Activated CD4-positive, alpha-beta T cell treated with anti-CD3 and anti-CD28 coated beads for 36 hours (primary cell): ENCODE measurements at regions of chr2 and their contacts with region 1.

Region 1: DNA sequence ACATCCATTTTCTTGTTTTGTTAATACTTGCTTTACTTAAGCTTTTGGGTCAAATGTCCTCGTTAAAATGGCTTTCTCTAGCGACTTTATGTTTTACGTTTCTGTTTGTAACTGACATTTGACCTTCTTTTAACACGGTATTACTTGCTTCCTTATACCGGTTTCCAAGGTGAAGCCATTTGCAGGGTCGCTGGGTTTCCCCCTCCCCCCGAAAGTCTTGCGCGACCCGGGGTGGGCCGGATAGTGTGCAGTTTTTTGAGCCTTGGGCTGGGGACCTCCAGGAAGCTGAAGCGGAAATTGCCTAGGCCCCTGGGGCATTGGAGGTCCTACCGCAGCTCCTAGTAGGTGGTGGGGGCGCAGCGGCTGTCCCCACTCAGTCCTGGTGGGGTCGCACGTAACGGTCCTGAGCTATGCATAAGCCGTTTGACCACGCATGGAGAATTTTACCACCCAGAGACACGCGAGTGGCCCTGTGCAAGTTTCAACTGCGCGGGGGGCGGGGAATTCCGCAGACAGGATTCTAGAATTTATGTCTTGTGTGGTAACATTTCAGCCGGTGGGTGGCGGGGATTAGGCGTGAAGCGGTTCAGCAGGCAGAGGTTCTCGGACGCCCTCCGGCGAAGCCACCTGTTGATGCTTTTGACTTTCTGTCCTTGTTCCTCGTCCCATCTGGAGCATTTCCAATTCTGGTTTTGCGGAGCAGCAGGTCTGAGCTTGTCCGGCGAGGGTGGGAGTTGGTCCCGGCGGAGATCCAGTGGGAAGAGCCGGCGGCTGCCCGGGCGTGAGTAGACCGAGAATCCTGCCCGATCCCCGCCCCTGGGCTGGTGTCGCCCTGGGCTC is 2.4 kb downstream of the CFLAR start:
- DNase-seq: peak; percentile 94
- ATAC-seq: peak; percentile 37
- H3K4me3 Mint-ChIP-seq: peak overlapping the region; percentile 98
- H3K27ac Mint-ChIP-seq: peak overlapping the region; percentile 100
- H3K4me1 Mint-ChIP-seq: peaks cover 42% of the 10 kb centered on the region
- H3K27me3 Mint-ChIP-seq: no peaks in the 10 kb centered on the region

Region 2: GRCh38 chr2:200829258-200829655 is 289.1 kb before region 1 on chr2:
- CTCF ChIA-PET with region 1: no interaction called
- POLR2A ChIA-PET with region 1: no interaction called
- intact Hi-C with region 1: no loop called
- DNase-seq: no peak
- ATAC-seq: no peak
- H3K4me3 Mint-ChIP-seq: no peak overlapping the region
- H3K27ac Mint-ChIP-seq: no peak overlapping the region
- H3K4me1 Mint-ChIP-seq: no peaks in the 10 kb centered on the region
- H3K27me3 Mint-ChIP-seq: no peaks in the 10 kb centered on the region

Region 3: DNA sequence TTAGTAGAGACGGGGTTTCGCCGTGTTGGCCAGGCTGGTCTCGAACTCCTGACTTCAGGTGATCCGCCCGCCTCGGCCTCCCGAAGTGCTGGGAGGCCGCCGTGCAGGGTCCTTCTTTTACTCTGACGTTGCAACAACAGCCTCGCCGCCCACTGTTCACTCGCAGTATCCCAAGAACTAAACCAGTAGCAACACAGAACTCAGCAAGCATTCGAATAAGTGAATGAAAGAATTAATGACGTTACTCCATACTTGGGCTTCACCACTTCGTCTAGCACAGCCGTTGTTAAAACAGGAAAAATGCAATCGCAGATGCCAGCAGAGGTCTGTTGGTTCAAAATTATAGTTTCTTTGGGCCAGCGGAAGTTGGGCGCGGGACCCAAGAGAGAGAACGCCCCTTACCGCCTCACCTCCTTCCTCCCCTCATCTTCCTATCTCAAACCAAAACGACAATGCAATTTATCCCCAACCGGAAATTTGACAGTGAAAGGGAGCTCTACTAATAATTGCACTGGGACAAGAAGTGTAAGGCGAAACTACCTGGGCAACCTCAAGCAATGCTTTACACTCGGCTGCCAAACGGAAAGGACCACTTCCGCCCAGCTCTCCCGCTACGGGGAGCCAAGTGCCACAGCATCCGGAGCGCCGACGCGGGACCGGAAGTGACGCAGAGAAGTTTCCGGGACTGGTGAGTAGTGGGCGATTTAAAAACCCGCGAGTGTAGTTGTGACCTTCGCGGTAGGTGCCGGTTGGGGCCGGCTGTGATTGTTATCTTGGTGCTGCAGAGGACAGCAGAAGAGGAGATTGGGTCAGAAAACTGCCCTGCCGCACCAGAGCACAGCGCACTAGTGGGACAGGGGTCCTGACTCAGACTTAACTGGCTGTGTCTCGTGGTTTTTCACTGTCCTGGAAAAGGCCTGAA is 229.4 kb before region 1 on chr2 and contains the starts of genes NIF3L1 and PPIL3:
- CTCF ChIA-PET with region 1: interaction called, 6 read pairs
- POLR2A ChIA-PET with region 1: no interaction called
- intact Hi-C with region 1: loop called (anchors 1 kb)
- DNase-seq: peak; percentile 99
- ATAC-seq: peak; percentile 83
- H3K4me3 Mint-ChIP-seq: peak within 1 kb of the TSS; percentile 98
- H3K27ac Mint-ChIP-seq: peak within 1 kb of the TSS; percentile 100
- H3K4me1 Mint-ChIP-seq: peaks cover 46% of the 10 kb centered on the region
- H3K27me3 Mint-ChIP-seq: no peaks in the 10 kb centered on the region
- total RNA-seq, gene NIF3L1: 37.0 to 47.7 TPM
- total RNA-seq, gene PPIL3: 52.6 to 53.0 TPM

Region 4: GRCh38 chr2:201040867-201041628 is 77.3 kb before region 1 on chr2:
- CTCF ChIA-PET with region 1: no interaction called
- POLR2A ChIA-PET with region 1: no interaction called
- intact Hi-C with region 1: no loop called
- DNase-seq: no peak
- ATAC-seq: no peak
- H3K4me3 Mint-ChIP-seq: no peak overlapping the region
- H3K27ac Mint-ChIP-seq: no peak overlapping the region
- H3K4me1 Mint-ChIP-seq: peaks cover 4% of the 10 kb centered on the region
- H3K27me3 Mint-ChIP-seq: no peaks in the 10 kb centered on the region

Region 5: DNA sequence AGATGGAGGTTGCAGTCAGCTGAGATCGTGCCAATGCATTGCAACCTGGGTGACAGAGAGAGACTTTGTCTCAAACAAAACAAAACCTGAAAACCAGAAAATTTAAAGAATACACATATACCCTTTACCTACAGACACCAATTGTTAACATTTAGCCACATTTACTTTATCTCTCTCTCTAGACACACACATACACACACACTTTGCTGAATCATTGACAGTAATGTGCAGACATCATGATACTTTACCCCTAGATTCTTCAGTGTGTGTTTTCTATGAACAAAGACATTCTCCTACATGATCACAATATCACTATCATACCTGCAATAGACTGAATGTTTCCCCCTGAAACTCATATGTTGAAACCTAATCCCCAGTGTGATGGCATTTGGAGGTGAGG is 12.6 kb before region 1 on chr2:
- CTCF ChIA-PET with region 1: interaction called, 11 read pairs
- POLR2A ChIA-PET with region 1: no interaction called
- intact Hi-C with region 1: no loop called
- DNase-seq: no peak
- ATAC-seq: no peak
- H3K4me3 Mint-ChIP-seq: no peak overlapping the region
- H3K27ac Mint-ChIP-seq: no peak overlapping the region
- H3K4me1 Mint-ChIP-seq: no peaks in the 10 kb centered on the region
- H3K27me3 Mint-ChIP-seq: no peaks in the 10 kb centered on the region

Region 6: DNA sequence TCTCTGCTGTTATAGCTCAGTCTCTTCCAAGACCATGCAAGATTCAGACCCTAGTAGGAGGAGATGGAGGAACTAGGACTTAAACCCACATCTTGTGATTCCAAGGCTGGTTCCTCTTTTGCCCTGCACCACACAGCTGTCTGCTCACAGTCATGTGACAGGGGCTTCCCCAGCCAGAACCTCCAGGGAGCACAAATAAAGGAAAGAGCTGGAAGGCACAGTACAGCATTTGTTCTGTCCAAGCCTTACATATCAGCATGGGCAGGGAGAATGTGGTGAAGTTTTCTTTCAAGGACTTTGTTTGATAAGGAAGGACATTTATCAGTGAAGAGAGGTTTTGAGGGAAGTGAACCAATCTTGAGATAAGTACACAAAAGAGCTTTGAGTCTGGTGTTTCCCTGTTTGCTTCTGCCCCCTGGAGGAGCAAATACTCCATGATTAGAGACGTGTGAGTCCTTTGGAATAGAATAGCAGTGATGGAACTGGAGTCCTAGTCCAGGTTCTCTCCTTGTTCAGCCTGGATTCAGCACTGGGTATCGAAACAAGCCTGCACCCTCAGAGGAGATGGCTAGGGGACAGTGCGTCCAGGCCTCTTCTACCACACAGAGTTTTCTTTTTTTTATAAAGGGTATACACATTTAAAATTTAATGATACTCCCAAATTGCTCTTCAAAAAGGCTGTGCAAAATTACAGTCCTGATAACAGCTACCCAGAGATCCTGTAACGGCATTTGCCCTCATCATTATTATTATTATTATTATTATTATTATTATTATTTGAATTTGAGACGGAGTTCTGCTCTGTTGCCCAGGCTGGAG is 40.0 kb after region 1 on chr2:
- CTCF ChIA-PET with region 1: interaction called, 14 read pairs
- POLR2A ChIA-PET with region 1: no interaction called
- intact Hi-C with region 1: loop called (anchors 1 kb)
- DNase-seq: peak; percentile 59
- ATAC-seq: peak; percentile 66
- H3K4me3 Mint-ChIP-seq: no peak overlapping the region
- H3K27ac Mint-ChIP-seq: peak overlapping the region; percentile 64
- H3K4me1 Mint-ChIP-seq: peaks cover 23% of the 10 kb centered on the region
- H3K27me3 Mint-ChIP-seq: no peaks in the 10 kb centered on the region